ENCODE measurements at regions of chr3 and their contacts with region 1.

Region 1: GRCh38 chr3:50227390-50228183 is 8.4 kb upstream of the GNAI2 start:
- DNase-seq: peak; percentile 94
- H3K4me3 Mint-ChIP-seq: peak overlapping the region; percentile 94
- H3K27ac Mint-ChIP-seq: peak overlapping the region; percentile 90
- H3K4me1 Mint-ChIP-seq: peaks cover 17% of the 10 kb centered on the region
- H3K27me3 Mint-ChIP-seq: no peaks in the 10 kb centered on the region

Region 2: DNA sequence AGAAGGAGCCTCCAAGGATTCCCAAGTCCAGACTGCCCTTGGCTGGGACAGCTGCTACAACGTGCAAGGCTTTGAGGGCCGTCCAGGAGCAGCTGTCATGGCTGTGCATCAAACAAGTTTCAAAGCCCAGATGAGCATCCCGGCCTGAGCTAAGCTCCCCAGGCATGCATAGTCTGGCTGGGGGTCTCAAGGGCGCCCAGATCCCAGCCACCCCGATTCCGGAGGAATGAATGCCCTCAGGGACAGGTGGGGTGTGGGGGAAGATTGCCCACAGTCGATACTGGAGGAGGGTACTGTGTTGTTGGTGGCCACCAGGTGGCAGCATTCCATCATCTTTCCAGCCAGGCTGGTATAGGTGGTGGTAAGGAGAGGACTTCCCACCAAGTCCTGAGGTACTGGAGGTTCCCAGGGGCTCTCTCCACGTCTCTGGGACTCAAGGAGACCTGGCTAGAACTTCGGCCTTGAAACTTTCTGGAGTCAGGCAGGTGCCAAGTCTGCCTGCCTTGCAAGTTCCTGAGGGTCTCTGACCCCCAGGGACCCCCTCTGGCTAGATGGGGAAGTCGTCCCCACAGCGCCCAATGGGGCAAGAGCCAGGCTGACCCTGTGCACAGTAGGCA is 106.1 kb before region 1 on chr3:
- CTCF ChIA-PET with region 1: interaction called, 24 read pairs
- POLR2A ChIA-PET with region 1: no interaction called
- intact Hi-C with region 1: loop called (anchors 1 kb)
- DNase-seq: peak; percentile 80
- H3K4me3 Mint-ChIP-seq: no peak overlapping the region
- H3K27ac Mint-ChIP-seq: no peak overlapping the region
- H3K4me1 Mint-ChIP-seq: no peaks in the 10 kb centered on the region
- H3K27me3 Mint-ChIP-seq: no peaks in the 10 kb centered on the region

Region 3: DNA sequence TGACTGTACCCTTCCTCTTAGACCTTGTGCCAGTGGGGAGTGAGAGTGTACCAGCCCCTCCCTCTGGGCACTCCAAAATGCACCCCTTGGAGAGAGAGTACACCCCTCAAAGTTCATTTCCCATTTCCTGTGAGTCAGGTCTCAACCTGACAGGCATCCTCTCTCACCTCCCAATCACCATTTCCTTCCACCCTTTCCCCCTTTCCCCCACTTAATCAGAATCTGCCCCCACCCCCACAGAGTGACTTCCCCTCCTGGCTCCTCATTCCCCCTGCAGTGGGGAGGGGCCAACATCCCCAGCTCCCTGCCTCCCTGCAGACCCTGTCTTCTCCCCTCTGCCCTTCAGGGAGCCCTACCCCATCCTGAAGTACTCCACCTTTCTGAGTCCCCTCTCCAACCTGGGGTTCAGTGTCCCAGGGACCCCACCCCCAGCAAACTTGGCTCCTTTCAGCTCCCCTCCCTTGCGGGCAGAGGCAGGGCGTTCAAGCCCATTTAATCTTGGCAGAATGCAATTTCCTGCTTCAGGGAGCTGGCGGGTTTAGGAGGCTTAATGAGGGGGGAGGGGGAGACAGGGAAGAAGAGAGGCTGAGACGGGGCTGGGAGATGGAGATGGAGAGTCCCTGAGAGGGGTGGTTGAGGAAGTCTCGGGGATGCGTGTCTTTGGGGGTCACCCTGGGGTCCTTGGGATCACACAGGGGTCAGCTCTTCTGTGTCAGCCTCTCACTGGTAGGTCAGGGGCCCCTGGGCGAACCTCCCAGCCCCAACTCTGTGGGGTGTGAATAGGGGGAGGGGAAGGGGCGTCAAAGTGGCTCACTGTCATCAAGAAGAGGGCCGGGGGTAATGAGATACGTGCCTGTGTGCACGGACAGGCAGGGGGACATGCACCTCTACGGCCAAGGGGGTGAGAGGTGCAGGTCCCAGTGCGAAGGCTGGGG is 89.1 kb before region 1 on chr3:
- CTCF ChIA-PET with region 1: no interaction called
- POLR2A ChIA-PET with region 1: no interaction called
- intact Hi-C with region 1: no loop called
- DNase-seq: no peak
- H3K4me3 Mint-ChIP-seq: no peak overlapping the region
- H3K27ac Mint-ChIP-seq: no peak overlapping the region
- H3K4me1 Mint-ChIP-seq: peaks cover 11% of the 10 kb centered on the region
- H3K27me3 Mint-ChIP-seq: no peaks in the 10 kb centered on the region

Region 4: DNA sequence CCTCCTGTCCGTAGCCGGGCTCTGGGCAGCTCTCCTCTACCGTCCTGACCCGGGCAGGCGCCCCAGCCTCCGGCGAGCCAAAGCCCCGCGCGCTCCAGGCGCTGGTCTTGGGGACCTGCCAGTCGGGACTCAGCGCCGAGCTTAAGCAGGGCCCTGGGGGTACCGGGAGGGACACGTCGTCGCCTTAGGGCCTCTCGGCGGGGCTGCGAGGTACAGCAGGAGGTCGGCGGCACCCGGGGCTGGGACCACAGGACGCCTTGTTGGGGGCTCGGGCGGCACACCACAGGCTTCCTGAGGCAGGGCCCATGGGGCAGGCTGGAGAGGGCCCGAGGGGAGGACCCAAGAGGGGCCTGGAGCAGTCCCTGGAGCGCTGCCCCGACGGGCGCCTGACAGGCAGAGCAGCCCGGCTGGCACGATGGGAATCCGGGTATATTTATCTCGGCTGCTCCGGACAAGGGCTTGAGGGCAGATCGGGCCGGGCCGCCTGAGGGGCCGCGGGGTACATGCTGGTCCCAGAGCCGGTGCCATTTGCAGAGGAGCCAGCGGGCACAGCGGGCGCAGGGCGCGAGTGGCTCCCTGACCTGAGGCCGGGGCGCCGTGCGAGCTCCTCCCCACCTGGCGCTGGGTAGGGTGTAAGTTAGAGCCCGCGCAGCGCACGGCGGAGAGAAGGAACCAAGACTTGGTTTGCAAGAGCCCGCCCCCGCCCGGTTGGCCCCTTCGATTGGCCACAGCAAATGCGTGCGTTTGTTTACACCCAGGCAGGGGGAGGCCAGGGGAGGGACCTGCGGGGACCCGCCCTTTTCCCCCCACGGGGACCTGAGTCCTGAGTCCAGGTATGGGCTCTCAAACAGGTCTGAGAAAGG is 21.9 kb before region 1 on chr3:
- CTCF ChIA-PET with region 1: interaction called, 25 read pairs
- POLR2A ChIA-PET with region 1: no interaction called
- intact Hi-C with region 1: no loop called
- DNase-seq: peak; percentile 41
- H3K4me3 Mint-ChIP-seq: peak overlapping the region; percentile 16
- H3K27ac Mint-ChIP-seq: no peak overlapping the region
- H3K4me1 Mint-ChIP-seq: peaks cover 2% of the 10 kb centered on the region
- H3K27me3 Mint-ChIP-seq: peaks cover 43% of the 10 kb centered on the region

Region 5: DNA sequence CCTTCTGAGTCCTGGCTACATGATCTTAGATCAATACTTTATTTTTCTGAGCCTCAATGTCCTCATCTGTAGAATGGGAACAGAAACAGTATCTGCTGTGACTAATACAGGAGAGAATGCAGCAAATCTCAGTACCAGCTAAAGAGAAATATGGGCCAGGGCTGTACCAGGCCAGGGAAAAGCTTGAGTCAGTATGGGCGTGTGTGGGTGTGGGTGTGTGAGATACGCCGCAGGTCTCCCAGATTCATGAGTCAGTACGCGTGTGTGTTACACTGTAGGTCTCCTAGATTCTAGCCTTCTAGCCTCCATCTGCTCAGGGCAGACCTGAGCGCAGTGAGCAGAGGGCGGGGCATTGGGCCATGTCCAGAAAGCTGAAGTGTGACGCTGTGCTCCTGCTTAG is 23.6 kb after region 1 on chr3:
- CTCF ChIA-PET with region 1: interaction called, 307 read pairs
- POLR2A ChIA-PET with region 1: interaction called, 18 read pairs
- intact Hi-C with region 1: loop called (anchors 1 kb)
- DNase-seq: peak; percentile 82
- H3K4me3 Mint-ChIP-seq: no peak overlapping the region
- H3K27ac Mint-ChIP-seq: peak overlapping the region; percentile 68
- H3K4me1 Mint-ChIP-seq: peaks cover 47% of the 10 kb centered on the region
- H3K27me3 Mint-ChIP-seq: no peaks in the 10 kb centered on the region

Region 6: GRCh38 chr3:50260027-50260941 is 32.7 kb after region 1 on chr3:
- CTCF ChIA-PET with region 1: interaction called, 96 read pairs
- POLR2A ChIA-PET with region 1: interaction called, 3 read pairs
- intact Hi-C with region 1: loop called (anchors 1 kb)
- DNase-seq: peak; percentile 92
- H3K4me3 Mint-ChIP-seq: peak overlapping the region; percentile 59
- H3K27ac Mint-ChIP-seq: peak overlapping the region; percentile 69
- H3K4me1 Mint-ChIP-seq: peaks cover 6% of the 10 kb centered on the region
- H3K27me3 Mint-ChIP-seq: no peaks in the 10 kb centered on the region

Region 7: DNA sequence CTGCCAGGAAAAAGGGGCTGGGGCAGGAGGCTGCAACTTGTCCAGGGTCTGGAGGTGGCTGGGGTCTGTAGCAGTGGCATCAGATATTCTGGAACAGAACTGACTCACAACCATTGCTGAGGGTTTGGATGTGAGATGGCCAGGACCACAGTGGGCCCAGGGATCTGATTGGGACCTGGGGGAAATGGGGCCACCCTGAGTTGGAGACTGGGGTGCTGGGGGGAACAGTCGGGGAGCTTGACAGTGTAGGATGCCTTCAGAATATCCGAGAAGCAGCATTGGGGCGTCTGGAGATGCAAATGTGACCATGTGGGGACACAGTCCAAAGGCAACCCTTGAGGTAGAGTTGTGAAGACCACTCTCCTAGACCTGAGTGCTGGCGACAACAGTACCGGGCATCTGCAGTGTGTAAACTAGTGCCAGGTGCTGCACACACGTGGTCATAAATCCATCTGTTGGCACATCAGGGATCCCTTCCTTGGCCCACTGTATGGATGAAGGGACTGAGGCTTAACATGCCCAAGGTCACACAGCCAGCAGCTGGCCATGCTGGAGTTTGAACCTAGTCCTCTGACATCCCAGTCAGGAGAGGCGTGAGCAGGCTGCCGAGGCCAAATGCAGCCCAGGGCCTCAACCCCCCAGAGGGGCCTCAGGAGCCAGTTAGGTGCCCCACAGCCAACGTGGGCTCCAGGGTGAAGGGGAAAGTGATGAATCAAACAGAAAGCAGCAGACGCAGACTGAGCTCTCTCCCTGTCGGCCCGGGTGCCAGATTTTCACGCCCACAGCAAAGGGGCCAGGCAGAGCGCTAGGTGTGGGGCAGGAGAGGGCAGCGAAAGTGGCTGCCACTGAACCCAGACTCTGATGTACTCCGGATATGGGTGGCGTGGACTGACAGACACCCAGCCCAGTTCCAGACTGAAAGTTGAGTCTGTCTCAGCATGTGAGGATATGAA is 360.5 kb after region 1 on chr3:
- CTCF ChIA-PET with region 1: no interaction called
- POLR2A ChIA-PET with region 1: no interaction called
- intact Hi-C with region 1: no loop called
- DNase-seq: peak; percentile 96
- H3K4me3 Mint-ChIP-seq: peak overlapping the region; percentile 68
- H3K27ac Mint-ChIP-seq: peak overlapping the region; percentile 98
- H3K4me1 Mint-ChIP-seq: peaks cover 94% of the 10 kb centered on the region
- H3K27me3 Mint-ChIP-seq: no peaks in the 10 kb centered on the region

Measured in activated CD4-positive, alpha-beta memory T cell treated with anti-CD3 and anti-CD28 coated beads for 36 hours (primary cell).